ENCODE measurements at regions of chr17 and their contacts with region 1.

Region 1: DNA sequence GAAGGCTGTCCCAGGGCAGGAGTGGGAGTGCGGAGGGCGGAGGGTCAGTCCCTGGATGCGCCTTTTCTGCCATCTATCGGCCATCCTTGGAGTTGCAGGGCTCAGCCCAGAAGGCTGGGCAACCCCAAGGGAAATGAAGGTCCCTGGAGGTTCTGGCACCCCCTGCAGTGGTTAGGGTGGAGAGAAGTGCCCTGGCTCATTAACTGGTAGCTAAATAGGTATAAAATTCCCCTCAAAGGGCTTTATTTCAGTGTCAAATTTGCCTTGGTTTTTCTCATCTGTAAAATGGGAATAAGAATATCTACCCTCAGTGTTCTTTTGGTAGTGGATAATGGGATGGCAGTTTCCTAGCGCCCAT is 22.4 kb downstream of the C17orf75 start:
- DNase-seq: no peak
- H3K4me3 ChIP-seq: no peak overlapping the region
- H3K27ac ChIP-seq: no peak overlapping the region
- H3K27me3 ChIP-seq: peaks cover 17% of the 10 kb centered on the region
- CTCF ChIP-seq: peak; percentile 97

Region 2: DNA sequence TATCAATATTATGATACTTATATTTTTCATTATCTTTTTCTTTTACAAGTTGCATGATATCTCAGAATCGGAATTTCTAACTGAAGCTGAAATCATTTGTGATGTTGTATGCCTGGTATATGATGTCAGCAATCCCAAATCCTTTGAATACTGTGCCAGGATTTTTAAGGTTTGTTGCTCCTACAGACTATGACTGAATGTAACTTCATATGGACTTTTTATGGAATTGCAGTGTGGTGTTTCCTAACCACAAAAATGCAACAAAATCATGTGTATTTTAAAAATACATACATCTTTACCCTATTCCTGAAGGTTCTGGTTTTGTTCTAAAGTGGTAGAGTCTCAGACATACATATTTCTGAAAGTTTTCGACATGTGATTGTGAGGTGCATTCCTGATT is 112.7 kb before region 1 on chr17:
- CTCF ChIA-PET with region 1: interaction called, 3 read pairs
- POLR2A ChIA-PET with region 1: interaction called, 12 read pairs
- DNase-seq: peak; percentile 48
- H3K4me3 ChIP-seq: no peak overlapping the region
- H3K27ac ChIP-seq: no peak overlapping the region
- H3K27me3 ChIP-seq: no peaks in the 10 kb centered on the region
- CTCF ChIP-seq: no peak

Region 3: DNA sequence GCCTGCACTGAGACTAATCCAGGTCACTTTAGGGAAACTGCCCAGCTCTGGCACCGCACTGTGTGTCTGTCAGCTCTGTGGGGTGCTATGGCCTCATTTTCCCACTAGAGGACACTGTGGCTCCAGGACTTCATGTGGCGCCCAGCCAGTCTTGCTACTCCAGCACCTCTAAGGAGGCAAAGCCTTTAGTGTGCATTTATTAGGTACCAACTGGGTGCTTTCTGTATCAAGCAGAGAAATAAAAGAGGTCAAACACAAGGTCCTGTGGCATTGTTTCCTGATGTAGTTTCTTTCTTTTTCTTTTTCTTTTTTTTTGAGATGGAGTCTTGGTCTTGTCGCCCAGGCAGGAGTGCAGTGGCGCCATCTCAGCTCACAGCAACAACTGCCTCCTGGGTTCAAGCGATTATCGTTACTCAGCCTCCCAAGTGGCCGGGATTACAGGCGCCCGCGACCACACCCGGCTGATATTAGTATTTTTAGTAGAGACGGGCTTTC is 66.4 kb before region 1 on chr17:
- CTCF ChIA-PET with region 1: interaction called, 51 read pairs
- POLR2A ChIA-PET with region 1: no interaction called
- DNase-seq: no peak
- H3K4me3 ChIP-seq: no peak overlapping the region
- H3K27ac ChIP-seq: no peak overlapping the region
- H3K27me3 ChIP-seq: no peaks in the 10 kb centered on the region
- CTCF ChIP-seq: peak; percentile 100

Region 4: DNA sequence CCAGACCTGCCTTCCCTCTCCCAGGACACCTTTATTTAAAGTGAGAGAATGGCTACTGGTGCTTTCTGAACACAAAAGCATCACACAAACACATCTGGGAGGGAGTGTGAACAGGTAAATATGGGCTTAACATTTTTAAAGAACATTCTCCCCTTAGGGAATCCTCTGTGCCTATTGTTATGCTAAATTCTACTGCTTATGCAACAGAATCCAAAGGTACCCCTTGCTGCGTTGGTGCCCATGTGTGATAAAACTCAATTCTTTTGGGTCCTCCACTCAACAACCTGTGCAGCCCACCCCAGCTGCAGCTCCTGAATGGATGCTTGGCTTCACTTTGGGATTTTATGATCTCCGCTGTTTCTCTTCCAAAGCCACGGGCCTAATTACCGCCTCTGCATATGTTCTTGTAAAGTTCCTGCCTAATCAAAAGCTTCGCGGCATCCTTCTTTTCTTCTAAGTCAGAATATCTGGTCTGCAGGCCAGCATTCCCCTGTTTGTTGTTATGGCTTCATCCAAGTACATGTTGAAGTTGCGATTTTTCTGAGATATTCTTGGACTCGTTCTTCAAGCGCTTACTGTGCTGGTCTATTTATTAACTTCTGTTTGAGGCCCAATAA is 30.0 kb before region 1 on chr17:
- CTCF ChIA-PET with region 1: interaction called, 10 read pairs
- POLR2A ChIA-PET with region 1: no interaction called
- DNase-seq: no peak
- H3K4me3 ChIP-seq: no peak overlapping the region
- H3K27ac ChIP-seq: no peak overlapping the region
- H3K27me3 ChIP-seq: peaks cover 18% of the 10 kb centered on the region
- CTCF ChIP-seq: no peak

Region 5: DNA sequence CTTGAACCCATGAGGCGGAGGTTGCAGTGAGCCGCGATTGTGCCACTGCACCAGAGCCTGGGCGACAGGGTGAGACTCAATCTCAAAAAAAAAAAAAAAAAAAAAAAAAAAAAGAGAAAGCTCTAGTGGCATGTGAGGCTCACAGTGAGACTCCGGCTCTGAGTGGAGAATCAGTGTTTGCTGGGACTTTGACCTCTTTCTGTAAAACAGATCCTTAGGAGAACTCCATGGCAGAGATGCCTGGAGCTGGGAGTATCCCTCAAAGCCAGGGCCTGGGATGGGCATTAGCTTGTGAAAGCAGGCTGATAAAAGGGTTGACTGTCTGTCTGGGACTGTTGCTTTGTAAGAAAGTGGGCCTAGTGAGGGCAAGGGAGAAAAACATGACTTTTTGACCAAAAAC is 76.8 kb after region 1 on chr17:
- CTCF ChIA-PET with region 1: no interaction called
- POLR2A ChIA-PET with region 1: no interaction called
- DNase-seq: no peak
- H3K4me3 ChIP-seq: no peak overlapping the region
- H3K27ac ChIP-seq: no peak overlapping the region
- H3K27me3 ChIP-seq: no peaks in the 10 kb centered on the region
- CTCF ChIP-seq: no peak